Upper lobe of right lung (tissue), 1 donor: ENCODE measurements at regions of chr14 and their contacts with region 1.

Region 1: DNA sequence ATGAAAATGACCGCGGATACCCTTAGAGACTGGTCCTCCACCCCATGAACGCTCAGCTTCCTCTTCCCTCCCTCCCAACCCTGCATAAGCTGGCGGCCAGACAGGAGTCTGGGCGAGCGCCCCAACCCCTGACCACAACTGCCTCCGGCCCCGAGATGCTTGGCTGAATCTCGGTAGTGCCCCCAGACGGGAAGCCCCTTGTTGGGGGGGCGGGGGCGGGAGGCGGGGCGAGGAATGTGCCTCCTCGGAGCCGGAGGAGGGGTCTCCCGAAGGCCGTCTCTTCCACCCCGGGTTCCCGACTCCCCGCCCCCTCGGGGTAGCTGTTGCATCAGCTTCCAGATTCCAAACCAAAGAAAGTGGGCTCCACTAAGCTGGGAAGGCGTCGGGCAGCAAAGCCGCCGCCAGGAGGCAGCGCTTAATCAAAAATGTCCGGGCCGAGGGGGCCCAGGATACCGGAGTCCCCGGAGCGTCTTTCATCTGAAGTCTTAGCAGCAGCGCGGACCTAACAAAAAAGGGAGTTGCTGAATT is 7.1 kb upstream of the MRPL52 start:
- DNase-seq: peak; percentile 88
- ATAC-seq: peak; percentile 77
- H3K4me3 ChIP-seq: peak overlapping the region; percentile 45
- H3K27ac ChIP-seq: peak overlapping the region; percentile 74
- H3K4me1 ChIP-seq: peaks cover 41% of the 10 kb centered on the region
- H3K27me3 ChIP-seq: no peaks in the 10 kb centered on the region
- CTCF ChIP-seq: peak; percentile 87

Region 2: GRCh38 chr14:22854963-22855724 is 32.5 kb after region 1 on chr14:
- intact Hi-C with region 1: loop called (anchors 5 kb)
- DNase-seq: no peak
- ATAC-seq: no peak
- H3K4me3 ChIP-seq: no peak overlapping the region
- H3K27ac ChIP-seq: no peak overlapping the region
- H3K4me1 ChIP-seq: peaks cover 27% of the 10 kb centered on the region
- H3K27me3 ChIP-seq: no peaks in the 10 kb centered on the region
- CTCF ChIP-seq: no peak